ENCODE measurements at regions of chr2 and their contacts with region 1.

Region 1: GRCh38 chr2:60818272-60818671 is 62.2 kb downstream of the PAPOLG start:
- DNase-seq: peak in 1 of 2 donors; percentile 60
- ATAC-seq: peak in 1 of 3 donors; percentile 29
- H3K4me3 ChIP-seq: no peak overlapping the region
- H3K4me3 Mint-ChIP-seq: peak overlapping the region; percentile 81
- H3K27ac ChIP-seq: peak overlapping the region; percentile 73
- H3K27ac Mint-ChIP-seq: peak overlapping the region; percentile 95 to 98
- H3K4me1 ChIP-seq: peaks cover 36% of the 10 kb centered on the region
- H3K4me1 Mint-ChIP-seq: peaks cover 38 to 49% of the 10 kb centered on the region in 2 donors
- H3K27me3 ChIP-seq: no peaks in the 10 kb centered on the region
- H3K27me3 Mint-ChIP-seq: no peaks in the 10 kb centered on the region
- CTCF ChIP-seq: peak; percentile 22

Region 2: GRCh38 chr2:60794277-60794863 is 23.9 kb before region 1 on chr2:
- intact Hi-C with region 1: loop called (anchors 2 kb)
- DNase-seq: peak in 1 of 2 donors; percentile 62
- ATAC-seq: peak in 2 of 3 donors; percentile 58 to 65
- H3K4me3 ChIP-seq: no peak overlapping the region
- H3K4me3 Mint-ChIP-seq: no peak overlapping the region
- H3K27ac ChIP-seq: no peak overlapping the region
- H3K27ac Mint-ChIP-seq: peak overlapping the region in 1 of 2 donors; percentile 56
- H3K4me1 ChIP-seq: peaks cover 6% of the 10 kb centered on the region
- H3K4me1 Mint-ChIP-seq: peaks cover 16 to 20% of the 10 kb centered on the region in 2 donors
- H3K27me3 ChIP-seq: no peaks in the 10 kb centered on the region
- H3K27me3 Mint-ChIP-seq: no peaks in the 10 kb centered on the region
- CTCF ChIP-seq: peak; percentile 86

Region 3: DNA sequence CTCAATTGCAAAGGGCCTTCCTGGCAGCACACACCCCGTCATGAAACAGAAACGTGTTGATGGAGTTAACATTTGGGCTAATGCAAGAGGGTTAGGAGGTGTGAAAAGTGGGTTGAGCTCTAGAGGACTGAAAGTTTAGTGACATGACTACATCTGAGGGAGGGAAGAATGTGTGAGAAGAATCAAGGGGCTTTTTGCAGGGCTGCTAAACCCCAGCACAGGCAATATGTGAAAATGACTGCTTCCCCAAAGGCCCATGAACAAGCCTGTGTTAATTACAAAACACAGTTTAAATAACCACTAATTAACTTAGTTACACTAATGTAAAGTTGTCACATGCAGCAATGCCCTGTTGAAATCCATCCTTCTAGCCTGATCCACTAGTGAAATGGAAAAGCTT is 135.9 kb after region 1 on chr2:
- intact Hi-C with region 1: loop called (anchors 1 kb)
- DNase-seq: peak; percentile 39 to 70
- ATAC-seq: peak; percentile 96 to 98 (median 98)
- H3K4me3 ChIP-seq: no peak overlapping the region
- H3K4me3 Mint-ChIP-seq: peak overlapping the region; percentile 74
- H3K27ac ChIP-seq: peak overlapping the region; percentile 80
- H3K27ac Mint-ChIP-seq: peak overlapping the region; percentile 83 to 95
- H3K4me1 ChIP-seq: peaks cover 16% of the 10 kb centered on the region
- H3K4me1 Mint-ChIP-seq: peaks cover 33 to 47% of the 10 kb centered on the region in 2 donors
- H3K27me3 ChIP-seq: no peaks in the 10 kb centered on the region
- H3K27me3 Mint-ChIP-seq: no peaks in the 10 kb centered on the region
- CTCF ChIP-seq: no peak

Region 4: GRCh38 chr2:60998628-60999545 is 180.6 kb after region 1 on chr2:
- intact Hi-C with region 1: loop called (anchors 1 kb)
- DNase-seq: peak; percentile 55 to 79
- ATAC-seq: peak; percentile 90 to 93 (median 91)
- H3K4me3 ChIP-seq: no peak overlapping the region
- H3K4me3 Mint-ChIP-seq: no peak overlapping the region
- H3K27ac ChIP-seq: no peak overlapping the region
- H3K27ac Mint-ChIP-seq: peak overlapping the region; percentile 24 to 48
- H3K4me1 ChIP-seq: no peaks in the 10 kb centered on the region
- H3K4me1 Mint-ChIP-seq: peaks cover 6 to 9% of the 10 kb centered on the region in 2 donors
- H3K27me3 ChIP-seq: no peaks in the 10 kb centered on the region
- H3K27me3 Mint-ChIP-seq: no peaks in the 10 kb centered on the region
- CTCF ChIP-seq: peak; percentile 86

Measured in natural killer cell (primary cell).